ENCODE measurements at regions of chr1 and their contacts with region 1.

Region 1: DNA sequence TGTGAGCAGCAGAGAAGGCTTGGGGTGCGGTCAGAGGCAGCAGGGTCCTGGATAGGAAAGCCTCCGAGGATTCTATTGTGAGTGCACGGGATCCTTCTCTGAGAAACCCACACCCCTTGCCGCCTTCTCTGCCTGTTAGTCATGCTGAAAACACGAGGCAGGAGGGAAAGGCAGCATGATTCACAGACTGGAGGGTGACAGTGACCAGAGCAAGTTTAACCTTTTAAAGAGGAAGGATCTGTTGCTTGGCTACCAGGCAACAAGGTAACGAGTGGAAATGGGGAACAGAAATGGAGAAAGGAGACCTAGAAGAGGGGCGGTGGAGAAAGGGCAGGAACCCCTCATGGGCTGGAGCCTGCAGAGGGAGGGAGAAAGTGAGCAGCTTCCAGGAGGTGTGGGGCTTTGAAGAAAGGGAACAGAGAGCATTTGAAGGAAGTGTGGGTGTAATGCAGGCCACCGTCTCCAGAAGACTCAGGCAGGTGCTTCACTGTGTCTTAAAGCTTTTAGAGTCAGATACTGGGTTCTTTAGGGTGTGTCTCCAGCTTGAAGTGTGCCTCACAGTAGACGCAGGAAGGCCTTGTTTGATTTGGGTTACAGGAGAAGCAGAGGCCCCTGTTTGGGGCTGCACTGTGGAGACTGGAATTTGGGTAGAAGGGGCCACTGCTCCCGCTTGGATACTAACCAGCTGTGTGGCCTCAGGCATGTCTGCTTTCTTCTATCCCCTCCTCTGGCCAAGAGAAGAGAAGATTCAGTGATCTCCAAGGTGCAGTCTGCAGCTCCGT is 19.1 kb downstream of the OPTC start:
- DNase-seq: no peak
- ATAC-seq: peak; percentile 14

Region 2: DNA sequence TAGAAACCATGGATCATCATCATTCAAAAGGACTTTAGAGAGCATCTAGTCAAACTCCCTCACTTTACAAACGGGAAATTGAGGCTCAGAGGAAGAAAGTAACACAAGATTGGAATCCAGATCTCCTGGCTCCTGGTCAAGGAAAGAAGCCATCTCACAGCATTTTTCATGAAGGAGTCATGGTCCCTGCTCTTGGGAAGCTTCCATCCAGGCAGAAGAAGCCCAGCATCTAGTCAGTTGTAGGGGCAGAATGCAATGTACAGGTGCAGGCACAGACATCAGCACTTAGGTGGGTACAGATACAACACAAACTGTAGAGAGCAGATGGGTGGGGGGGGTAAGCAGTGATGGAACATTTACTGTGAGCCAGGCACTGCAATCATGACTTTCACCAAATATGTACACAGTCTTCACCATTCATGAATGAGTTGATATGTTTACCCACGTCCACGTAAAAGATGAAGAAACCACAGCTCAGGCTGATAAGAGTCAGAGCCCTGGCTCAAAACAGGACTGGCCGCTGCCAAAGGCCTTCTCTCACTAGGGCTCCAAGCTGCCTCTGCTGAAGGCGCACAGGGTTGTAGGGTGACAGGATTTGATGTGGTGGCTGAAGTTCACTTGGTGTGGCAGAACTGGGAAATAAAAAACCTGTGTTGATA is 24.9 kb after region 1 on chr1:
- intact Hi-C with region 1: loop called (anchors 2 kb)
- DNase-seq: no peak
- ATAC-seq: peak; percentile 55